ENCODE measurements at regions of chr2 and their contacts with region 1.

Region 1: GRCh38 chr2:230798769-230799399 is 65.9 kb upstream of the ITM2C start:
- H3K4me3 ChIP-seq: no peak overlapping the region
- H3K27ac ChIP-seq: no peak overlapping the region
- H3K4me1 ChIP-seq: peaks cover 10% of the 10 kb centered on the region
- CTCF ChIP-seq: no peak

Region 2: GRCh38 chr2:230614913-230615332 is 184.0 kb before region 1 on chr2:
- CTCF ChIA-PET with region 1: interaction called, 16 read pairs
- POLR2A ChIA-PET with region 1: no interaction called
- H3K4me3 ChIP-seq: no peak overlapping the region
- H3K27ac ChIP-seq: no peak overlapping the region
- H3K4me1 ChIP-seq: no peaks in the 10 kb centered on the region
- CTCF ChIP-seq: no peak

Region 3: GRCh38 chr2:230712443-230713330 is 86.2 kb before region 1 on chr2 and contains the start of gene CAB39:
- CTCF ChIA-PET with region 1: interaction called, 14 read pairs
- POLR2A ChIA-PET with region 1: interaction called, 4 read pairs
- H3K4me3 ChIP-seq: peak within 1 kb of the TSS; percentile 87
- H3K27ac ChIP-seq: peak within 1 kb of the TSS; percentile 84
- H3K4me1 ChIP-seq: peaks cover 3% of the 10 kb centered on the region; the same call in 1 of the 2 replicates
- CTCF ChIP-seq: peak; percentile 68

Region 4: GRCh38 chr2:230721712-230722111 is 77.2 kb before region 1 on chr2:
- CTCF ChIA-PET with region 1: interaction called, 10 read pairs
- POLR2A ChIA-PET with region 1: no interaction called
- H3K4me3 ChIP-seq: no peak overlapping the region
- H3K27ac ChIP-seq: no peak overlapping the region
- H3K4me1 ChIP-seq: peaks cover 7% of the 10 kb centered on the region; the same call in 1 of the 2 replicates
- CTCF ChIP-seq: no peak

Region 5: GRCh38 chr2:230762317-230762896 is 36.5 kb before region 1 on chr2:
- CTCF ChIA-PET with region 1: interaction called, 14 read pairs
- POLR2A ChIA-PET with region 1: interaction called, 5 read pairs
- H3K4me3 ChIP-seq: no peak overlapping the region
- H3K27ac ChIP-seq: no peak overlapping the region
- H3K4me1 ChIP-seq: peaks cover 14% of the 10 kb centered on the region
- CTCF ChIP-seq: no peak

Region 6: GRCh38 chr2:230814616-230815015 is 15.7 kb after region 1 on chr2:
- CTCF ChIA-PET with region 1: interaction called, 17 read pairs
- POLR2A ChIA-PET with region 1: no interaction called
- H3K4me3 ChIP-seq: no peak overlapping the region
- H3K27ac ChIP-seq: no peak overlapping the region
- H3K4me1 ChIP-seq: no peaks in the 10 kb centered on the region
- CTCF ChIP-seq: no peak

Region 7: DNA sequence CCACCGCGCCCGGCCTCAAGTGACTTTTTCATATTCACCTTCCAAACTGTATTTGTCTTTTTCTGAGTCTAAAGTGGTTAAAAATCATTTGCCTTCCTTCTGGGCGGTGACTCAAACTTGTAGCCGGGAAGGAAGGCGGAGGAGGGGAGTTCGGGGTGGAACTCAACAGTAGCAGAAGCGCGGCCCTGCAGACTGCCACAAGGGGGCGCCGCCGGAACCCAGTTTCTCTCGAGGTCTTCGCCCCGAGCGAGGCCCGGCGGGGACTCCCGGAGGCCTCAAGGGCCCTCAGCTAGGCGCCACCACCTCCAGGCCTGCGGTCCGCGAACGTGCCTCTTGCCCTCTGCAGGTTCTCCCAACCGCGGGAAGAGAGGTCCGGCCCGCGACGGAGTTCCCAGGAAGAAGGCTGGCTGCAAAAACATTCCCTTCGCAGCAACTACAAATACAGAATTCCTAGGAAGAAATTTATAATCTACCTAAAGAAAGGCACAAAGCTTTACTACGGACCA is 49.1 kb after region 1 on chr2:
- CTCF ChIA-PET with region 1: no interaction called
- POLR2A ChIA-PET with region 1: no interaction called
- H3K4me3 ChIP-seq: no peak overlapping the region
- H3K27ac ChIP-seq: no peak overlapping the region
- H3K4me1 ChIP-seq: no peaks in the 10 kb centered on the region
- CTCF ChIP-seq: peak; percentile 84

Measured in HEK293 (cell line).